ENCODE measurements at regions of chr4 and their contacts with region 1.

Region 1: GRCh38 chr4:184343502-184344177 is 126.0 kb upstream of the ENPP6 start:
- DNase-seq: no peak
- CTCF ChIP-seq: no peak

Region 2: DNA sequence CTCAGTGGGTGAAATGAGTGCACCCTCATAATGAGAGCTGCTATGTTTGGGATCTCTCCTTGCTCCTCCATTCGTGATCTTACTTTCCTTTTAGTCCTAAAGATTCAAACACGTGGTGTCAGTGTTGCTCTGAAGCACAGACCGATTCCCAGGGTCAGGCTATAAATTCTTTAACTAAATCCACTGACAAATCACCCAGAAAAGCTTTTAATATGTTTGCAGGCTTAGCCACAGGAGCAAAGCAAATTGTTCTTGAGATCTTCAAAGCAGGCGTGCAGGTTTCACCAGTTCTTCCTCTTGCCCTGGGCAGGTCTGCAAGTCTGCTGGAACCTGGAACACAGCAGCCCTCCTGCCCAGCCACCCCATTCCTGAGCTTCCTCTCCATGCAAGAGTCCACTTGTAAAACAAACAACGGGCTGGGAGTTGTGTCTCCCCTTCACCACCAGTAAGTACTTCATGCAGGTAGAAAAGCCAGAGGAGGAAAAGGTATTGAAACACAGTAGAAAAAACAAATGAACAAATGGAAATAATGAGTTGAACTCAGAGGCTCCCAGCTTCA is 55.9 kb before region 1 on chr4:
- CTCF ChIA-PET with region 1: interaction called, 12 read pairs
- POLR2A ChIA-PET with region 1: no interaction called
- DNase-seq: no peak
- CTCF ChIP-seq: peak; percentile 12

Region 3: GRCh38 chr4:184310171-184310567 is 33.5 kb before region 1 on chr4:
- CTCF ChIA-PET with region 1: interaction called, 12 read pairs
- POLR2A ChIA-PET with region 1: interaction called, 3 read pairs
- DNase-seq: peak; percentile 57
- CTCF ChIP-seq: peak; percentile 44

Region 4: DNA sequence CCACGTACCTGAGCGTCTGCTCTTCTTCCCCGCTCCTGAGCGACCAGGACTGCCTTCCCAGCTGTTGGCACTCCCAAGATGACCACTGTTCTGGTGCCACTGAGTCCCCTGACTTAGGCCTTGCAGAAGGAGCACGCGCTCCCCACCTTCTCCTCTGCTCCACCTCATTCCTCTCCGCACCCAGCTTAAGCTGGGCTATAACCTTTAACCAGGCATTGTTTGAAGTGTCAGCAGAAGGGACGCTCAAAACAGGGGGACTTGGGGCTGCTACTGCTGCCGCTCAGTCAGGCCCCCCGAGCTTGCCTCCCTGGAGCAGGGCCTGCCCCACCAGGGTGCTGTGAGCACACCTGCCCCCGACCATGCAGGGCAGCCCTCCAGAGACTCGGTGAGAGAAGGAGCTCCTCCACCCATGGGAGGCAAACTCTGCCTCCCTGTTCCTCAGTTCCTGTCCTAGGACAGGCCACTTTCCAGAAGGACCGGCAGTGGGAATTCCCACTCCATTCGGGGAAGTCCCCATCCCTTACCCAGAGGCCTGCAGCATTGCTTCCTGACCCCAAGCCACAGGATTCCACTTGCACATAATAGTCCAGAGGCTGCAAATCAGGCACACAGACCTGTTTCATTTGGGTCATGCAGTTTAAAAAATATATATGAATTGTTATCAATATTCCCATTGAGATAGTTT is 26.3 kb before region 1 on chr4:
- CTCF ChIA-PET with region 1: interaction called, 9 read pairs
- POLR2A ChIA-PET with region 1: interaction called, 10 read pairs
- DNase-seq: no peak
- CTCF ChIP-seq: no peak

Measured in GM10248 (cell line).